ENCODE measurements at regions of chr21 and their contacts with region 1.

Region 1: DNA sequence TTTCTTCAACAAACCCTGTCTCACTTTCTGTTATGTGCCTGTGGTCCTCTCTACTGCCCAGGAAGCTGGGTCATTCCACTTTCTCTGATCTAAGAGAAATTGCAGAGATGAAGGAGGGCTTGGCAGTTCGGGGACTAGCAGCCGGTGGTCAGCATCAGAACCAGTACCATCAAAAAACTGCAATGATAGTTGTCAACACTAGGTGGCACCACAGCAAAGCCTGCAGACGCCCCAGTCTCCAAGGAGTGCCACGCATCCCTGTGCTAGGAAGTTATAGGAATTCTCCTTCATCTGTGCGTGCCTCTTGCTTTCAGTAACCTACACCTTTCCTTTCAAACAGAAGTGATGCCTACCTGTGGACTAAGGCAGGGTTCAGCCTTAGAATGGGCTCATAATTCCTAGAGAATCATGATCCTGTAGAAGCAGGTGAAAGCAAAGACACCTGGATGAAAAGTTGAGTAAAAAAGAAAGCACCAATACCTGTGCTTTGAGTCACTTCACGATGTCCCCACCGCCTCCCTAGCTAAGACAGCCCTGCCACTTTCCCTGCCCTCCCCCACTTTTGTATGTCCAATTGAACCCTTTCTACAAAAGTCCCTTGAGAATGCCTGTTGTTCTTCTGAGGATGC is 129.2 kb downstream of the ADAMTS1 start:
- DNase-seq: peak in 41 of 42 donors; percentile 20 to 87 (median 64)

Region 2: DNA sequence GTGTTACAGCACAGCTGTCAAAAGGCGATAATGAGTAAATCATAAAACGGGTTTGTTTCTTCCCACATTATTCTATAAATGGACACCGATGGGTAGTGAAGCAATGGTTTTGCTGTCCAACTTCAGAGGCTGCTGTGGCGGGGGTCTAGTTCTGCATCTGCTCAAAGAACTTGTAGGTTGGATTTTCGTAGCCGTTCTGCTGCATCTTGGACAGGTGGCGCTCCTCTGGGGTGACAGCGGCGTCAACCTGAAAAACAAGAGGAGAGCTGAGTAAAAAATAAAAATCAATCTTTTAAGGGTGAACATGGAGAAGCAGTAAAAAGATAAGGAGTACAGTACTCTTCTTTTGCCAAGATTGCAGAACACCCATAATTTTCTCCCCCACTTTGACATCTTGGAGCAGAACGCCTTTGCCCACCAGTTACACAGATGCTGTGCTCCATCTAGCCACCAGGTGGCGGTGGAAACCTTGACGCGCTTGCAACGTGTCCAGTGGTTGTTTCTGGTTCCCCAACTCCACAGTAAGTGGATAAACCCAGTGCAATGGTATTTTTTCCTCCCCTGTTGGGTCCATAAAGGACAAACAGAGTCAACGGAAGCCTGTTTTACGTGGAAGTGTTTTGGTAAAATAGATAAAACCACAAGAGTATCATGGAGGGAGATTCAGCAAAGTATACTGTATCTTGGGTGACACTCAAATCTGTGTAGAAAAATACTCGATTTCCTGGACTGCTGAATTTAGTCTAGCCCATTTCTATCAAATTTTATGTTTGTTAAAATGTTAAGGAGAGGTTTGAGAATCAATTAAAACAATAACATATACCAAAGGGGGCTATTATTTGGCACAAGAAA is 834.2 kb before region 1 on chr21:
- intact Hi-C with region 1: loop called (anchors 10 kb)
- DNase-seq: peak; percentile 18 to 93 (median 77)

Region 3: GRCh38 chr21:26769613-26770188 is 53.7 kb after region 1 on chr21:
- intact Hi-C with region 1: no loop called
- DNase-seq: peak in 14 of 42 donors; percentile 7 to 62 (median 24)